ENCODE measurements at regions of chr12 and their contacts with region 1.

Region 1: GRCh38 chr12:19129486-19130223 is at the start of gene PLEKHA5:
- DNase-seq: peak; percentile 39 to 83
- H3K4me3 ChIP-seq: peak within 1 kb of the TSS; percentile 75
- H3K27ac ChIP-seq: peak within 1 kb of the TSS; percentile 57
- H3K4me1 ChIP-seq: peaks cover 21% of the 10 kb centered on the region
- H3K27me3 ChIP-seq: no peaks in the 10 kb centered on the region
- CTCF ChIP-seq: no peak
- total RNA-seq, gene PLEKHA5: 51.3 and 54.1 TPM in 2 replicates

Region 2: DNA sequence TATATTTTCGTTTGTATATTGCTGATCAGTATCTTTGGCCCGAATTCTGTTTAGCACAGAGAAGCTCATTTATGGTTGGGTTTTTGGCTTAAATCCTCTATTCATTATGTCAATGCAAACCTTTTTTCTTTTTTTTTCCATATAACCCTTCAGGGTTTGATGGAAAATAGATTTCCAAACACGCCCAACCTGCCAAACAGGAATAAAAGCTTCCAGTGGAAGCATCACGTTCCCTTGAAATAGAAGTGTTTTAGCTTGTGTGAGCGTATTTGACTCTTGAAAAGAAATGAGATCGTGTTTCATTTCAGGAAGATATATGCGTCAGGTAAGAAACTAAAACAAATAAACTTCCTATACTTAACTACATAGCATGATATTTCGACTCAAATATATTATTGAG is 868.4 kb before region 1 on chr12 and contains the start of gene PIK3C2G:
- CTCF ChIA-PET with region 1: no interaction called
- POLR2A ChIA-PET with region 1: no interaction called
- intact Hi-C with region 1: loop called (anchors 5 kb)
- DNase-seq: peak; percentile 37 to 62
- H3K4me3 ChIP-seq: peak within 1 kb of the TSS; percentile 8; the same call in 1 of the 2 replicates
- H3K27ac ChIP-seq: no peak within 1 kb of the TSS
- H3K4me1 ChIP-seq: 0 out of 2 replicates have a peak, but pooled peaks cover 9% of the 10 kb centered on the region
- H3K27me3 ChIP-seq: no peaks in the 10 kb centered on the region
- CTCF ChIP-seq: no peak
- total RNA-seq, gene PIK3C2G: 0.30 and 1.4 TPM in 2 replicates

Region 3: DNA sequence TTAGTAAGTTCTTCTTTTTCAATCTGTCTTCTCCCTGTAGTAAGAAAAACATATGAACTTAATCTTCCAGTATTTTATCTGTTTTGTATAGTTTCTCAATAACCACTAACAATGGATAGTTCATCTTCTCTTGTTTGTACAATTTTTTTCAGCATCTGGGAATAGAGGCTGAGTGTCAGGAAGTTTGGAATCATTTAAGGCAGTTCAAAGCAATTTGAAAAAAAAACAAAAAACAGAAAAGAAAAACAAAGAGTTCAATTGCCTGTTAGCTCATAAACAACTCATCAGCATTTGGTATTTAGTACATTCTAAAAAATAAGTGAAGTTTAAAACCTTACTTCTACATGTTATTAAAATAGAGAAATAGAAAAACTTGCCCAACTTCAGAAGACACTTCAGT is 508.7 kb before region 1 on chr12:
- CTCF ChIA-PET with region 1: no interaction called
- POLR2A ChIA-PET with region 1: no interaction called
- intact Hi-C with region 1: no loop called
- DNase-seq: no peak
- H3K4me3 ChIP-seq: no peak overlapping the region
- H3K27ac ChIP-seq: no peak overlapping the region
- H3K4me1 ChIP-seq: no peaks in the 10 kb centered on the region
- H3K27me3 ChIP-seq: no peaks in the 10 kb centered on the region
- CTCF ChIP-seq: no peak

Region 4: DNA sequence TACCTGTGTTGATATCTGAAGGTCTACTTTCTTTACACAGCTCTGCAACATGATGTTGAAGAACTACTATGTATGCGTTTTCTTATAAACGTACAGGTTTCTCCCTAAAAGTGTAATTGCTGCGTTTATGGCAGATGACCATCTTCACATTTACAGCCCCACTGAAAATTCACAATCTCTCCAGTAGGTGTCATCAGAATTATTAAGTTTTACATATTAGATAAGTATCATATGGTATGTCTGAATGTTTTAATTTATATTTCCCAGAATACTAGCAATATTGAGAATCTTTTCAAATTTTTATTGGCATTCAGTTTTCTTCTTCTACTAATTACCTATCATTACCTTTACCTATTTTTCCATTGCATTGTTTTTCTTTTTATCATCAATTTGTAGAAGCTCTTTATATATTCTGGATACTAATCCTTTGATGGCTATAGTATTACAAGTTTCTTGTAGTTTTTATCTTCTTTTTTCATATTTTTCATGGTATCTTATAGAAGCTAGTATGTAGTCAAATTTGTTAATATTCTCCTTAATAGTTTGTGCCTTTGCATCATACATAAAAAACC is 268.3 kb before region 1 on chr12:
- CTCF ChIA-PET with region 1: no interaction called
- POLR2A ChIA-PET with region 1: no interaction called
- intact Hi-C with region 1: loop called (anchors 2 kb)
- DNase-seq: no peak
- H3K4me3 ChIP-seq: no peak overlapping the region
- H3K27ac ChIP-seq: no peak overlapping the region
- H3K4me1 ChIP-seq: no peaks in the 10 kb centered on the region
- H3K27me3 ChIP-seq: no peaks in the 10 kb centered on the region
- CTCF ChIP-seq: peak; percentile 82

Region 5: DNA sequence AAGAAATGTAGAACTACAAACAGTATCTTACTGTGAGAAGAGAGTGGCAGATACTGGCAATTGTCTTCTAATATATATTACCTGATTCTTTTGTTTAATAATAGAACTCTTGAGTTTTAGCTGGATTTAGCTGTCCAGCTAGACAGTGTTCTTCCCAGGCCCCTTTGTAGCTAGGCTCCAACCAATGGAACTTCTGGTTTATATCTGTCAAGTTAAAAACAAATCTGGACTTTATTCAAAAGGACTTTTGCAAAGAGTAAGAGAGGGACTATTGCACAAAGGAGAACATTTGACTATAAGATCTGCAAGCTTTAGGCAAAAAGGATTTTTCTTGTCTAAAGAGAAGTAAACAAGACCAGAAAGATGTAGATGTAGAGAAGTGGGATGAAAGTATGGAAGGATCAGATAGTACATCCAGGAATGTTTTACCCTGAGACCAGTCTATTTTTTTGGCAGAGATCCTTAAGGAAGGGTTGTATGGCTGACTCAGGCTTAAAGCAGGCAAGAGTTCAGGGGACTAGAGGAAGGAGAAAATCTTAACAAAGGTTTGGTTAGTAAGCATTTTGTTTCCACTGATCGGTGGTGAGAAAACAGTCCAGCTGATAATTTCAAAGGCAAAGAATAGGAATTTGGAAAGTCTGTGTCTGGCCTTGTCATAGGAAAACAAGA is 111.2 kb before region 1 on chr12:
- CTCF ChIA-PET with region 1: no interaction called
- POLR2A ChIA-PET with region 1: no interaction called
- intact Hi-C with region 1: loop called (anchors 5 kb)
- DNase-seq: peak in 1 of 2 experiments; percentile 46
- H3K4me3 ChIP-seq: no peak overlapping the region
- H3K27ac ChIP-seq: peak overlapping the region; percentile 76
- H3K4me1 ChIP-seq: peaks cover 32% of the 10 kb centered on the region
- H3K27me3 ChIP-seq: no peaks in the 10 kb centered on the region
- CTCF ChIP-seq: no peak

Region 6: GRCh38 chr12:19186722-19187661 is 57.3 kb after region 1 on chr12:
- CTCF ChIA-PET with region 1: no interaction called
- POLR2A ChIA-PET with region 1: interaction called, 5 read pairs
- intact Hi-C with region 1: loop called (anchors 5 kb)
- DNase-seq: peak in 1 of 2 experiments; percentile 42
- H3K4me3 ChIP-seq: no peak overlapping the region
- H3K27ac ChIP-seq: no peak overlapping the region
- H3K4me1 ChIP-seq: no peaks in the 10 kb centered on the region
- H3K27me3 ChIP-seq: no peaks in the 10 kb centered on the region
- CTCF ChIP-seq: peak; percentile 83

Region 7: DNA sequence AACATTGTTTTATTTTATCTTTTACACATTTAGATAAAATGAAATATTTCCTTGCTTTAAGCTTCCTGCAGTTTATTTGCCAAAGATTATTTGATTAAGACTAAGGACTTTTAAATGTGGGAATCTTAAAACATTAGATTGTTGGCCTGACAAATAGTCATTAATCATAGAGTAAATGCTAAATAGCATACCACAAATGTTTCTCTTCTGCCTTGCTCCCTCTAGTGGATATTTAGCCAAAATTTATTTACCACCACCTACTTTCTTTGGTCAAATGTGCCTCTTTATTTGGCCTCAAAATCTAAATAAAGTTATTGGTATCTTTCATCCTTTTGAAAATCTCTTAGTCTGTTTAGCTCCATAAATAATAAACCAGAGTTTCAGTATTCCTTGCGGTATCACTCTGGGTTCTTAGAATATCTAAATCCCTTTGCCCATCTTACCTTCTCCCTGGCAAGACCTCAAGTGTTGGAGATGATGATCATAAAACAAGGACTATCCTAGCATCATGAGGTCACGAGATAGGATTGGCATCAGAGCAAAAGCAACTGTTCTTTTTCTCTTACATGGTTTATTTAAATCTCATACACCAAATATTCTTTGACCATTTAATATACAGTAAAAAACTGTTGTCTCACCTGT is 159.1 kb after region 1 on chr12:
- CTCF ChIA-PET with region 1: no interaction called
- POLR2A ChIA-PET with region 1: no interaction called
- intact Hi-C with region 1: loop called (anchors 5 kb)
- DNase-seq: peak in 1 of 2 experiments; percentile 40
- H3K4me3 ChIP-seq: no peak overlapping the region
- H3K27ac ChIP-seq: no peak overlapping the region
- H3K4me1 ChIP-seq: no peaks in the 10 kb centered on the region
- H3K27me3 ChIP-seq: no peaks in the 10 kb centered on the region
- CTCF ChIP-seq: peak; percentile 73

Measured in PC-9 (cell line).